ENCODE measurements at regions of chr7 and their contacts with region 1.

Region 1: DNA sequence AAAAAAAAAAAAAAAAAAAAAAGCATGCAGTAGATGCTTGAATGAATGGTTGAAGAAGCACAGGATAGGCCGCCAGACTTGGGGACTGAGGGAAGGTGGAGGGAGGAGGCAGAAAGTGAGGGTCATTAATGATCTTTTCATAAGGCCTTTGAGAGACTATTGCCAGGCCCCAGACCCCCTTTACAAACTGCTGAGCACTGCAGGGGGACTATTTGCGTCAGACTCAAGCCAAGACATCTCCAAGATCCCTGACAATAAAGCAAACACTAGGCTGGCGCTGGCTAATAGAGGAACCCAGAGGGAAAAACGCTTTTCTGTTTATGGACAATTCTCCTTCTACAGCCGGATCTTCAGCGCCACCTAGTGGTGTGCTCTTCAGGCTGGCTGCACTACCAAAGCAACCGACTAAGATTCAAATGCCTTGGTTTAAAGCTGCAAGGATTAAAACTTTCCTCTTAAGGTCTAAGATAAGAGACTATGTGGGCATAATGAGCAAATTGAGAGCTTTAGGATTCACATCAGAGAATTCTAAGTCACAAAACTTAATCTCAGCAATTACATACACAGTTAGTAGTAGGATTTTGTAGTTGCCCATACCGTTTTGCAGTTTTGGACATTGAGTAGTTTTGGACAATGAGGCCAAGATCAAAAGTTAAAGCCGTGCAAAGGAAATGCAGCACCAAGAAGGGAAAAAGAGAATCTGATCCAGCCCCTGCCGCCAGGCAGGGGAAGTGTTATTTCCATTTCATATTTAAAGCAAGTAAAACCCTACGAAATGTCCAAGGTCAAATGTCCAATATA is 17.9 kb upstream of the AGK start:
- DNase-seq: peak; percentile 51 to 79
- ATAC-seq: peak; percentile 78 to 92 (median 80)
- H3K4me3 ChIP-seq: no peak overlapping the region
- H3K27ac ChIP-seq: no peak overlapping the region
- H3K4me1 ChIP-seq: peaks cover 8% of the 10 kb centered on the region
- H3K27me3 ChIP-seq: no peaks in the 10 kb centered on the region
- CTCF ChIP-seq: peak; percentile 98

Region 2: DNA sequence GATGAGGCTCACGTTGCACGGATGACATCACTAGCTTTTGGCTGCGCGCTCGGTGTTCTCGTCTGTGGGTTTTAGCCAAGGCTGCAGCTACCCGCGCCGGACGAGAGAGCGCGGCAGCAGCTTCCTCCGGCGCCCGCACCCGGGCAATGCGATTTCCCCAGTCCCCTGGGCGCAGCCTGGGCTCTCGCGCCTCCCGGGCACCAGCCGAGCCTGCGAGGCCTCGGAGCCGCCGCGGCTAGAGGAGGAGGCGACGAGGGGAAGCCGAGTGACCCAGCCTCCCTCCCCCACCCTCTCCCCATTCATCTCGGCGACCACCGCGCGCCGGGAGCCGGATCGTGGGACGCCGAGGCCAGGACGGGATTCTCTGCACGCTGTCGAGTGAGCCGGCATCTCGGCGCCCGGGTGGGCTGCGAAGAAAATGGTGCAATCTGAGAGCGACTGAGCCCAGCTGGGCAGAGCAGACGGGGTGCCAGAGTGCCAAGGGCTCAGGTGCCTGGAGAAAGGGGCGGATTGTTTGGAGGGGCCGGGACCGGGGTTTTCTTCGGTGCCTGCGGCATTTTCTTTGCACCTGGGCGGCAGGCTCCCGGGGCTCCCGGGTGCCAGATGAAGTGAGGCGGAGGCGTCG is 460.7 kb before region 1 on chr7:
- intact Hi-C with region 1: loop called (anchors 5 to 10 kb)
- DNase-seq: peak; percentile 65 to 86
- ATAC-seq: peak; percentile 77 to 91 (median 80)
- H3K4me3 ChIP-seq: peak overlapping the region; percentile 79
- H3K27ac ChIP-seq: peak overlapping the region; percentile 71
- H3K4me1 ChIP-seq: peaks cover 7% of the 10 kb centered on the region
- H3K27me3 ChIP-seq: peaks cover 0 to 25% (median 5%) of the 10 kb centered on the region in 3 donors
- CTCF ChIP-seq: no peak

Region 3: GRCh38 chr7:141328290-141328689 is 205.1 kb before region 1 on chr7:
- intact Hi-C with region 1: loop called (anchors 2 to 10 kb)
- DNase-seq: no peak
- ATAC-seq: peak; percentile 91 to 97 (median 93)
- H3K4me3 ChIP-seq: no peak overlapping the region
- H3K27ac ChIP-seq: no peak overlapping the region
- H3K4me1 ChIP-seq: no peaks in the 10 kb centered on the region
- H3K27me3 ChIP-seq: no peaks in the 10 kb centered on the region
- CTCF ChIP-seq: peak; percentile 31